ENCODE measurements at regions of chr19 and their contacts with region 1.

Region 1: GRCh38 chr19:19185853-19186740 is 5.9 kb downstream of the BORCS8 start:
- DNase-seq: peak in 1 of 3 donors; percentile 34
- ATAC-seq: peak; percentile 78 to 87 (median 82)
- H3K4me3 ChIP-seq: no peak overlapping the region
- H3K27ac ChIP-seq: no peak overlapping the region
- H3K4me1 ChIP-seq: peaks cover 0 to 10% (median 6%) of the 10 kb centered on the region in 4 donors
- H3K27me3 ChIP-seq: no peaks in the 10 kb centered on the region
- CTCF ChIP-seq: peak; percentile 52 to 61 (median 58)
- POLR2A ChIP-seq: no peak

Region 2: GRCh38 chr19:19320362-19321142 is 134.5 kb after region 1 on chr19 and contains the starts of genes MAU2 and SUGP1:
- intact Hi-C with region 1: no loop called
- DNase-seq: peak; percentile 90 to 92 (median 91)
- ATAC-seq: peak; percentile 95 to 99 (median 96)
- H3K4me3 ChIP-seq: peak within 1 kb of the TSS; percentile 98 to 100 (median 99)
- H3K27ac ChIP-seq: peak within 1 kb of the TSS; percentile 84 to 88 (median 88)
- H3K4me1 ChIP-seq: peaks cover 0 to 25% (median 5%) of the 10 kb centered on the region in 4 donors
- H3K27me3 ChIP-seq: no peaks in the 10 kb centered on the region
- CTCF ChIP-seq: peak; percentile 37 to 53 (median 44)
- POLR2A ChIP-seq: peak; percentile 69
- total RNA-seq, gene MAU2: 10.4 to 30.4 (median 19.3) TPM
- total RNA-seq, gene SUGP1: 19.7 to 25.9 (median 23.6) TPM

Region 3: DNA sequence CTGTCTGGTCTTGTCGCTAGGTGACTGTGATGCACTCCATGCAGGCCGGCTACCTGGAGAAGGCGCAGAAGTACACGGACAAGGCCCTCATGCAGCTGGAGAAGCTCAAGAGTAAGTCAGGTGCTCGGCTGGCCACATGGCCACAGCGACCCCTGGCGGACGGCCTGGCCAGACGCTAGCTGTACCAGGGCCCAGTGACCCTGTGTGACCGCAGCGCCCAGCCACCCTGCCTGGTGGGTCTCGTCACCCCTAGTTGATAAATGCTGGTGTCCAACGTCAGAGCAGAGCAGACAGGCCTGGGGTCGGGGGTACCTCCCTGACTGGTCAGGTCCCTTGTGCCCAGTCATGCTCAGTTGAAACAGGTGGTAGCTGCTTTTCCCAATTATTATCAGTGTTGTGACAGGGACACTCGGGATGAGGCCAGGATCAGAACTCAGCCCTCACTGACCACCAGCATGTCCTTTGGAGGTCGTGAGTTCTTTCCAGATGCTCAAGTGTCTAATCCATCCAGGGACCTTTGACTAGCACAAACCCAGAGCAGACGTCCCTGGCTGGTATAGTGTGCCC is 156.7 kb after region 1 on chr19:
- intact Hi-C with region 1: loop called in 1 of 2 experiments (anchors 10 kb)
- DNase-seq: peak; percentile 68 to 77 (median 74)
- ATAC-seq: peak; percentile 80 to 92 (median 84)
- H3K4me3 ChIP-seq: no peak overlapping the region
- H3K27ac ChIP-seq: no peak overlapping the region
- H3K4me1 ChIP-seq: no peaks in the 10 kb centered on the region
- H3K27me3 ChIP-seq: no peaks in the 10 kb centered on the region
- CTCF ChIP-seq: peak; percentile 79 to 91 (median 88)
- POLR2A ChIP-seq: no peak

Measured in right lobe of liver (tissue), 6 donors.